HCT116 (cell line): ENCODE measurements at regions of chr3 and their contacts with region 1.

Region 1: DNA sequence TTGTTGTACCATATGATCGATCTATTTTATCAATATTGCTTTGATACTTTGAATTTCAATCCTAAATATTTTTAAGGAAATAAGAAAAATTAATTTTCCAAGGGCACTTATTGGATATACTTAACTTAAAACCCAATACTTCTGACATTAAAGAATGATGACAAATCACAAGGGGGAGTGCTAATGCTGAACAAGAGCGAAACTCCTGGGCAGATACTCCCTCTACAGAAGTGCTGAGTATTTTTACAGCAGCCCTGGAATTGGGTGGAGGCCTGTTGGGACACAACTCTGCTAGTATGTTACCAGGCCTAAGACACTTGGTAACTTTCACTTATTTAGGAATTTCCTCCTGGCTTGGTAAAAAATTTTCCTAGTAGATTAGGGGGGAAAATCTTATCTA is 46.2 kb downstream of the DENND6A start:
- DNase-seq: peak; percentile 3
- ATAC-seq: peak; percentile 54; the same call in 1 of the 2 replicates
- H3K4me3 ChIP-seq: no peak overlapping the region
- H3K27ac ChIP-seq: no peak overlapping the region
- H3K4me1 ChIP-seq: no peaks in the 10 kb centered on the region
- H3K27me3 ChIP-seq: no peaks in the 10 kb centered on the region
- CTCF ChIP-seq: peak in 1 of 3 experiments; percentile 49; a peak in 1 of 6 replicates
- POLR2A ChIP-seq: no peak
- RAD21 ChIP-seq: peak; percentile 75

Region 2: GRCh38 chr3:57464801-57465200 is 181.9 kb before region 1 on chr3:
- CTCF ChIA-PET with region 1: no interaction called
- POLR2A ChIA-PET with region 1: no interaction called
- RAD21 ChIA-PET with region 1: no interaction called
- intact Hi-C with region 1: no loop called
- DNase-seq: peak; percentile 29
- ATAC-seq: peak; percentile 90
- H3K4me3 ChIP-seq: no peak overlapping the region
- H3K27ac ChIP-seq: no peak overlapping the region
- H3K4me1 ChIP-seq: peaks cover 0 to 7% of the 10 kb centered on the region in 2 experiments; a peak in 1 of 4 replicates
- H3K27me3 ChIP-seq: no peaks in the 10 kb centered on the region
- CTCF ChIP-seq: peak; percentile 17 to 34 (median 24); a peak in 3 of 6 replicates
- POLR2A ChIP-seq: no peak
- RAD21 ChIP-seq: peak; percentile 56

Region 3: DNA sequence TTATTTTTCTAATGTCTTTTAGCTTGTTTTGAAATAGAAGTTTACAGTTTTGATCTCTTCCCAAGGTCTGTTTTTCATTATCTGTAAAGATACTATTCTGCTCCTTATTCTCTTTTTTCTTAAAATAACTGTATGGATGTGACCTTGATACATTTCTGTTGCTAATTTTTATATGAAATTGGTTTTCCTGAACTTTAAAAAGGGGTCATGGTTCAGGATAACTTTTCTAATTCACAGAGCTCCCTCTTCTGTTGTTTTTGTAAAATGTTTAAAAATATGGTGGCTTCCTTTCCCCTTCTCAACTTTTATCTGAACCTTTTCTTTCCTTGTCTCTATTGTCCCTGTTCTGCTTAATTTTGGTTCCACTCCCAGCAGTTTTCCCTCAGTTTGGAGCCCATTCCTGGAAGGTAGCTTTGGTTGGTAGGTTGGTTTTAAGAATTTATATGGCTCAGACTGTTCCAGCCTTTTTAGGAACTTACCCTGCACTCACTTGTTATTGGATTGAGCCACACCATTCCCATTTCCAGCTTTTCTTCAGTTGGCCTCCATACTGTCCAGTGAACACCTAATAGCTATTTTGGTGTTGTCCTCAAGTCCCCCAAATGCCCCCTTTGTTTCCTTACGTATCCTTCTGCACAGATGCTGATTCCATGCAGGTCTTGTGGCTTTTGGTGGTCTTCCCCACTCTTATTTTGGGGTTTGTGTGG is 179.7 kb after region 1 on chr3:
- CTCF ChIA-PET with region 1: no interaction called
- POLR2A ChIA-PET with region 1: no interaction called
- RAD21 ChIA-PET with region 1: no interaction called
- intact Hi-C with region 1: loop called (anchors 5 kb)
- DNase-seq: no peak
- ATAC-seq: no peak
- H3K4me3 ChIP-seq: no peak overlapping the region
- H3K27ac ChIP-seq: no peak overlapping the region
- H3K4me1 ChIP-seq: peaks cover 8 to 25% of the 10 kb centered on the region in 2 experiments
- H3K27me3 ChIP-seq: no peaks in the 10 kb centered on the region
- CTCF ChIP-seq: peak in 2 of 3 experiments; percentile 29 to 48; a peak in 2 of 6 replicates
- POLR2A ChIP-seq: no peak
- RAD21 ChIP-seq: peak; percentile 76

Region 4: DNA sequence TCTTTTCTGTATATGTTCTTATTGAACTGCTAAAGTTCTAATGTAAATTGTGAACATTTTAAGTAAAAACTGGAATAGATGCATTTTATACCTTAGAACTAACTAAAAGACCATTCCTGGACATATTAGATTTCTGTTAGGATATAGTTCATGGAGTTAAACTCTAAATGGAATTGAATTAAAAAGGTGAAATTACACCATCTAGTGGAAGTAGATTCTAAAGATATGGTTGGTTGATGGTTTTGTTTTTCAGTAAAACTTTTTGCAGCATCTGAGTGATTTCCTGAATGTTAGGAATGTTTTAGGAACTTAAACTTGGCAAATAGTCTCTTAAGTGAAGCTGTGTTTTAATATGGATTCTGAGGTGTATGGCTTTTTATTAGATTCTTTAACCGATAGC is 206.2 kb after region 1 on chr3:
- CTCF ChIA-PET with region 1: no interaction called
- POLR2A ChIA-PET with region 1: no interaction called
- RAD21 ChIA-PET with region 1: no interaction called
- intact Hi-C with region 1: loop called (anchors 1 kb)
- DNase-seq: no peak
- ATAC-seq: no peak
- H3K4me3 ChIP-seq: no peak overlapping the region
- H3K27ac ChIP-seq: no peak overlapping the region
- H3K4me1 ChIP-seq: no peaks in the 10 kb centered on the region
- H3K27me3 ChIP-seq: no peaks in the 10 kb centered on the region
- CTCF ChIP-seq: peak in 2 of 3 experiments; percentile 25 to 48; a peak in 3 of 6 replicates
- POLR2A ChIP-seq: no peak
- RAD21 ChIP-seq: peak; percentile 58

Region 5: DNA sequence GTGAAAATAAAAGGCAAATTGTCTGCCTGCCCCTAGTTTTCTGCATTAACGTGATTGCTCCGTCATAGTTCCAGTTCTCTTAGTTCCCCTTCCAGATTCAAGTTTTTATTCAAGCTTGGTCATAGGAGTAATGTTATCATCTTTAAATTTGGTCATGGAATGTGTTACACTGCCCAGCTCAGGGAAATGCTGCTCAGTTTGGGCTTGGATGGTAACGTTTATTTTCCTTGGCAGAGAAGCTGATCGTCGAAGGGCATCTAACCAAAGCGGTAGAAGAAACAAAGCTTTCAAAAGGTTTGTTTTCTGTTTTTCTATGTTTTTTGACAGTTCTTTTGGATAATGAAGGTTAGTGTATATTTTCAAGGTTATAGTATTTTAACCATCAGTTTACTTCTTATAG is 243.1 kb after region 1 on chr3:
- CTCF ChIA-PET with region 1: no interaction called
- POLR2A ChIA-PET with region 1: no interaction called
- RAD21 ChIA-PET with region 1: no interaction called
- intact Hi-C with region 1: no loop called
- DNase-seq: no peak
- ATAC-seq: no peak
- H3K4me3 ChIP-seq: no peak overlapping the region
- H3K27ac ChIP-seq: no peak overlapping the region
- H3K4me1 ChIP-seq: no peaks in the 10 kb centered on the region
- H3K27me3 ChIP-seq: no peaks in the 10 kb centered on the region
- CTCF ChIP-seq: no peak
- POLR2A ChIP-seq: no peak
- RAD21 ChIP-seq: no peak